ENCODE measurements at regions of chr13 and their contacts with region 1.

Region 1: GRCh38 chr13:31012655-31013024 is 80.2 kb downstream of the TEX26 start:
- DNase-seq: no peak

Region 2: DNA sequence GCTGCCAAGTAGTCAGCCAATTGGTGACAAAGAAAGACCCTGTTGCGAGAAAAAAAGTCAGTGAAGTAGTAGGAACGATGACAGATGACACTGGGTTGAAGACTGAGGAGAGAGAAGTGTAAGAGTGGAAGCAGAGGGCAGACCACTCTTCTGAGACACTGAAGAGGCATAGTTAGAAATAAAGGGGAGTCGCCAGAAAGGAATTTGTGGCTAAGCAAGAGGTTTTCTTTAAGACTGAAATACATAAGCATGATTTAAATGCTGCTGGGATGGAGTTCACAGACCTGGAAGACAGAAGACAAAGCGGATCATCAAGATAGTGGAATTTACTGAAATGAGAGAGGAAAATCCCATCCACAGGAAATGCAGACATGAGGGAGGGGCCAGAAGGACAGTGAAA is 451.1 kb before region 1 on chr13:
- intact Hi-C with region 1: loop called in 1 of 2 experiments (anchors 1 kb)
- DNase-seq: no peak

Region 3: GRCh38 chr13:30963791-30964190 is 48.8 kb before region 1 on chr13:
- intact Hi-C with region 1: no loop called
- DNase-seq: no peak

Measured in posterior vena cava (tissue), 2 donors.